ENCODE measurements at regions of chr7 and their contacts with region 1.

Region 1: GRCh38 chr7:2870471-2870931 is 26.4 kb upstream of the GNA12 start:
- DNase-seq: peak; percentile 37
- H3K4me3 Mint-ChIP-seq: no peak overlapping the region
- H3K27ac Mint-ChIP-seq: no peak overlapping the region
- H3K4me1 Mint-ChIP-seq: peaks cover 24% of the 10 kb centered on the region
- H3K27me3 Mint-ChIP-seq: no peaks in the 10 kb centered on the region
- CTCF ChIP-seq: no peak

Region 2: DNA sequence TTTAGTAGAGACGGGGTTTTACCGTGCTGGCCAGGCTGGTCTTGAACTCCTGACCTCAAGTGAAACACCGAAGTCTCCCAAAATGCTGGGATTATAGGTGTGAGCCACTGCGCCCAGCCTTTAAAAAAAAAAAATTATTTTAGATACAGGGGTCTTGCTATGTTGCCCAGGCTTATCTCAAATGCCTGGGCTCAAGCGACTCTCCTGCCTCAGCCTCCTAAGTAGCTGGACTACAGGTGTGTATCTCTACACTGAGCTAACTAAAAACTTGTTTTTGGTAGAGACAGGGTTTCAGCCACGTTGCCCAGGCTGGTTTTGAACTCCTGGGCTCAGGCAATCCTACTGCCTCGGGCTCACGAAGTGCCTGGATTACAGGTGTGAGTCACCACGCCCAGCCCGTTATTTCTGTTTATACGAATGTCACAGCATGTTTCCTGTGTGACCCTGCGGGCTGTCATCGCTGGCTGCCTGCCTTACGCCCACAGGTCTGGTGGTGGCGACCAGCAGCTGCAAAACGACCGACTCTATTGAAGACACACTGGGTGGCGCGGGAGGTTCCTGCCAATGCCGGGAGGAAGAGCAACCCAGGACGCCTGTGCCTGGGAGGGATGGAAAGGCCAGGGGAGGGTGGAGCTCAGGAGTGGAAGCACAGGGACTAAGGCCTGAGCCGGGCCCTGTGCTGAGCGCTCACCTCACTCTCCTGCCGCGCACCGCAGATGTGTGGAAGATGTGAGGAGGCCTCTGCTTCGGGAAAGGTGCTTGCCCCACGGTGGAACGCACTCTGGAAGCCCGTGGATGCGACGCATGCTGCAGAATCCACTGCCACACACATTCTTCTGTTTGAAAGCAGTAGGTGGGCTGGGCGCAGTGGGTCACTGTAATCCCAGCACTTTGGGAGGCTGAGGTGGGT is 149.7 kb before region 1 on chr7:
- CTCF ChIA-PET with region 1: no interaction called
- POLR2A ChIA-PET with region 1: no interaction called
- intact Hi-C with region 1: loop called (anchors 10 kb)
- DNase-seq: peak; percentile 84
- H3K4me3 Mint-ChIP-seq: no peak overlapping the region
- H3K27ac Mint-ChIP-seq: peak overlapping the region; percentile 63
- H3K4me1 Mint-ChIP-seq: peaks cover 6% of the 10 kb centered on the region
- H3K27me3 Mint-ChIP-seq: no peaks in the 10 kb centered on the region
- CTCF ChIP-seq: no peak

Region 3: GRCh38 chr7:2886900-2887299 is 16.4 kb after region 1 on chr7:
- CTCF ChIA-PET with region 1: no interaction called
- POLR2A ChIA-PET with region 1: no interaction called
- intact Hi-C with region 1: no loop called
- DNase-seq: peak; percentile 76
- H3K4me3 Mint-ChIP-seq: no peak overlapping the region
- H3K27ac Mint-ChIP-seq: no peak overlapping the region
- H3K4me1 Mint-ChIP-seq: no peaks in the 10 kb centered on the region
- H3K27me3 Mint-ChIP-seq: no peaks in the 10 kb centered on the region
- CTCF ChIP-seq: peak; percentile 81

Region 4: GRCh38 chr7:3573151-3573550 is 702.6 kb after region 1 on chr7:
- CTCF ChIA-PET with region 1: no interaction called
- POLR2A ChIA-PET with region 1: no interaction called
- intact Hi-C with region 1: loop called (anchors 5 kb)
- DNase-seq: no peak
- H3K4me3 Mint-ChIP-seq: no peak overlapping the region
- H3K27ac Mint-ChIP-seq: no peak overlapping the region
- H3K4me1 Mint-ChIP-seq: no peaks in the 10 kb centered on the region
- H3K27me3 Mint-ChIP-seq: no peaks in the 10 kb centered on the region
- CTCF ChIP-seq: no peak